ENCODE measurements at regions of chr11 and their contacts with region 1.

Region 1: GRCh38 chr11:107565219-107565937 is at the start of gene ALKBH8:
- DNase-seq: peak; percentile 75
- H3K4me3 ChIP-seq: peak within 1 kb of the TSS; percentile 28 to 80 (median 79)
- H3K27ac ChIP-seq: peak within 1 kb of the TSS; percentile 48
- H3K4me1 ChIP-seq: peaks cover 36% of the 10 kb centered on the region
- H3K27me3 ChIP-seq: no peaks in the 10 kb centered on the region
- CTCF ChIP-seq: no peak
- POLR2A ChIP-seq: peak; percentile 67
- total RNA-seq, gene ALKBH8: 9.8 and 10.2 TPM in 2 replicates

Region 2: DNA sequence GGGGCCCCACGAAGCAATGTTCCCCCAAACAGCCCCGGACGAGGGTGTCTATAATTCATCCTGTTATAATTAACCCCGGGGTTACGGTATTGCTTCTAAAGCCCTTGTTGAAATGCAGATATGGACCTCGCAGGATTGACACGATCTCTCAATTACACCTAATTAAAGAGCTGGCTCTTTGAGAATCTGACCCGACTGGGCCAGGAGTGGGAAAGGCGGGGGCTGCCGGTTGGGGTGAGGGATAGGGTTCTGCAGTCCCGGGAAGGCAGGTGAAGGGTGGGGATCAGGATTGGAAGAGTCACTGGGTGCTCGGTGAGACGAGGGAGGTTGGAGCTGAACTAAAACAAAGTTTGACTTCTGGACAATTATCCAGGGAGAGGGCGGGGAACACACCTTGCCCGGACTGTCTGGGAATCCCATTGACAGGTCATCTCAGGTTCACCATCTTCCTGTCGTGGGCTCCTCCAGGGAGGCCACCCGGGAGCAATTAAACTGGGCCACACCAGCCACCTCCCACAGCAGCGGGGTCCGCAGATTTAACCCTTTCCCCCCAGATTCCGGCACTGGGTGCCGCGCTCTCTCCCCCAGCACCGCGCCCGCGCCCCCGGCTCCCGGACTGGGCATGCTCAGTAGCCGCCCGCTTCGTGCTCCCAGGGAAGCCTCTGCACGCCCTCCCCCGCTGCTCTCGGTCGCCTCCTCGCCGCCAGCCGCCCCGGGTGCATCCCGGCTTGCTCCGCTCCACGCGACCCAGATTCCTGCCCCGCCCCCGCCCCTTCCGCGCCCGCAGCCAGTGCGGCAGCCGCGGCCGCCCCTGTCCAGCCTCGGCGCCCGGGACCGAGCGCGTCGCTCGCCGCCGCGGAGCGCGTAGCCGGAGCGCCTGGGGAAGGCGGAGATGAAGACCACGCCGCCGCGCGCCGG is 25.3 kb after region 1 on chr11 and contains the start of gene ELMOD1:
- CTCF ChIA-PET with region 1: interaction called, 5 read pairs
- POLR2A ChIA-PET with region 1: no interaction called
- dilution Hi-C with region 1: no loop called
- intact Hi-C with region 1: loop called (anchors 2 kb)
- DNase-seq: peak; percentile 46
- H3K4me3 ChIP-seq: peak within 1 kb of the TSS; percentile 5 to 86 (median 50)
- H3K27ac ChIP-seq: no peak within 1 kb of the TSS
- H3K4me1 ChIP-seq: peaks cover 12% of the 10 kb centered on the region
- H3K27me3 ChIP-seq: peaks cover 16 to 35% of the 10 kb centered on the region in 2 experiments
- CTCF ChIP-seq: peak in 1 of 2 donors; percentile 39
- POLR2A ChIP-seq: no peak
- total RNA-seq, gene ELMOD1: 0.53 and 2.4 TPM in 2 replicates

Region 3: DNA sequence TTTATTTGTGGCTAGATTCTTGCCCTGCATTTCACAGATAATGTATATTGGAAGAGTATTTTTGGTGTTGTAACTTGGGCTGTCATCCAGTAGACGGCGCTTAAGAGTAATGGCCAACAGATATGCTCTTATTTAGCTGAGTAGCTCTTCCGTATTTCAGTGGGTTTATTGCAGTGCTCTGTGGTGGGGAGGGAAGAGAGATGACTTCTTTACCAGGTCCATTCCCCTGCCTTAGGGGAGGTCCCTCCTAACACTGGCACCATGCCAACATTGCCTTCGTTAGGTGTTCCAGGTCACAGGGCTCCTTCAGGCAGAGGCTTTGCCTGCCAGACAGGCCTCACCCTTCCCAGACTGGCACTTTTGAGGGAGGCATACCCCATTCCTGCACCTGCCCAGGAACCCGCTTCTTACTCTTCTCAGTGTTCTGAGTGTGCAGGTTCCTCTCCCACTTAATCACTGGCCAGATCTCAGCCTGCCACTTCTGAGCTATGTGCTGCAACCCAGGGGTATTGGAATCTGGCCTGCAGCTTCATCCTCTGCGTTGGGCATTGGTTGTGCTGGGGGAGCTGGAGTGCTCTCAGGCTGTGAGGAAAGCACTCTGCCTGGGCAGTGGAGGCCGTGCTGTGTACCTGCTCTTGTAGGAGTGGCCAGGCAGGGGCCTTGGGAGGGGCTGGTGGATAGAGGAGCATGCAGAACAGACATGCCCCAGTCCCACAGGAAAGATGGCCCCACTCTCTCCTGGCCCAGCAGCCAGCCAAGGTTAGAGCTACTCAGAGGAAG is 175.9 kb after region 1 on chr11:
- CTCF ChIA-PET with region 1: interaction called, 20 read pairs
- POLR2A ChIA-PET with region 1: no interaction called
- dilution Hi-C with region 1: no loop called
- intact Hi-C with region 1: no loop called
- DNase-seq: peak; percentile 48
- H3K4me3 ChIP-seq: no peak overlapping the region
- H3K27ac ChIP-seq: no peak overlapping the region
- H3K4me1 ChIP-seq: no peaks in the 10 kb centered on the region
- H3K27me3 ChIP-seq: peaks cover 5 to 20% of the 10 kb centered on the region in 2 experiments
- CTCF ChIP-seq: peak; percentile 63 to 73
- POLR2A ChIP-seq: no peak

Region 4: GRCh38 chr11:107770551-107770951 is 205.2 kb after region 1 on chr11:
- CTCF ChIA-PET with region 1: interaction called, 34 read pairs
- POLR2A ChIA-PET with region 1: no interaction called
- dilution Hi-C with region 1: no loop called
- intact Hi-C with region 1: no loop called
- DNase-seq: no peak
- H3K4me3 ChIP-seq: no peak overlapping the region
- H3K27ac ChIP-seq: no peak overlapping the region
- H3K4me1 ChIP-seq: no peaks in the 10 kb centered on the region
- H3K27me3 ChIP-seq: peaks cover 2 to 4% of the 10 kb centered on the region in 2 experiments
- CTCF ChIP-seq: no peak
- POLR2A ChIP-seq: no peak

Region 5: DNA sequence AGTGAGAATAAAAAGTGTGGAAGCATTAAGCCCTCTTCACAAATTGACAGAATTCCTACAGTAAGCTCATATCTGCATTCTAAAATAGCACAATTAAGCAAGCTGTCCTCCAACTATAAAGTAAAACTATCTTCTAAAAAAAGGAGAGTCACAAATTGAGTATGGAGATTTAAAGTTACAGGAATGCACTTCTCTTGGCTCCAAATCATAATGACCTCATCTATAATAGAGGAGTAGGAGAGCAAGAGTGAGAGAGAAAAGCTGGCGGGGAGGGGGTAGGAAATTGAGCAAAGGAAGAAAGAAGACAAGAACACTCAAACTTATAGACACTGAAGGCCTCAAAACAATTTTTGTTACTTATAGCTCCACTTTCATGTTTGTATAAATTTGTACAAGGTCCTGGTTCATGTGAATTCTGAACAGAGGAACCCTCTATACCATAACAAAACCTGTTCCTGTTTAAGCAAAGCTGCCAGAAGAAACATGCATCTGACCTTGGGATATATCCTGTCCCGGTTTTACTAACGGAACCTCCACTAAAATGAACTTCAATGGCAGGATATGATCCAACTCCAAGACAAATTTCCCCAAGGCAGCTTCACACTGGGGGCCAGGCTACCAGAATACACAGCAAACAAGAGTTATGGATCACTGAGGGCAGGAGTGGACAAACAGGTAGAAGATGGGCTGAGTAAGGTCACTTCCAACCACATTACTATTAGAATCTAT is 256.0 kb after region 1 on chr11:
- CTCF ChIA-PET with region 1: no interaction called
- POLR2A ChIA-PET with region 1: no interaction called
- dilution Hi-C with region 1: no loop called
- intact Hi-C with region 1: no loop called
- DNase-seq: peak; percentile 97
- H3K4me3 ChIP-seq: peak overlapping the region in 2 of 3 experiments; percentile 16 to 63
- H3K27ac ChIP-seq: peak overlapping the region; percentile 99
- H3K4me1 ChIP-seq: peaks cover 59% of the 10 kb centered on the region
- H3K27me3 ChIP-seq: no peaks in the 10 kb centered on the region
- CTCF ChIP-seq: no peak
- POLR2A ChIP-seq: peak; percentile 52

Region 6: DNA sequence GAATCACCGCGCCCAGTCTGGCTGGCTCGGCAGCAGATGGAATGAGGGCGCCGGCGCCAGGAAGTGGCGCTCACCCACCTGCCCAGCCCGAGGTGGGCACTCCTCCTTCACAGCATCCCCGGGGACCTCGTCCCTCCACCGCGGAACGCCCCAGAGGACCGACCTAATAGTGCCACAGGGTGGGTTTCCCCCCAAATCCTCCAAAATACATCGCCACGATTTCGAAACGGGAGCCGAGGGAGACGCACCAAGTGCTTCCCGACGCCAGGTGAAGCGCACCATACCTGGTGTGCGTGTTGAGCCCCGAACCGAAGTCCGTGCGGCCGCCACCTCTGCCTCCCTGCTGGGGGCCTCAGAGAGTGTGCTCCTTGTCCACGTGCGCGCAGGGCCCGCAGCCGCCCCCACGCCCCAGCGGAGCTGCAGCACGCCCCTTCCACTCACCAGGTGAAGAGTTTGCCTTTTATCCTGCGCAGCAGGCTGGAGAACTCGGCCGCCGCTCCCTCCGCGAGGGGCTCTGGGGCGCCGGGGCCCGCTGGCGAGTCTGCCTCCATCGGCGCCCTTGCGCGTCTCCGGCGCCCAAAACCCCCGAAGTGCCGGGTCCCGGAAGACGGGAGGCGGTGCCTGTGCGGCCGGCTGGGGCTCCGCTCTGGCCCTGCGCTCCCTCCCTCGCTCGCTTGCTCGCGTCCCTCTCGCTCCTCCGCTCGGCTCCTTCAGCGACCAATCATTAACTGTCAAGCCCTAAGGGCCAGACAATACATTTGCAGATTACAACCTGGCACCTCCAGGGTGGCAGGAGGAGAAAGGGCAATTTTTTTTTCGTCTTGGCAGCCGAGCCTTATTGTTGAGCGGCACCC is 293.1 kb after region 1 on chr11 and contains the start of gene SLC35F2:
- CTCF ChIA-PET with region 1: no interaction called
- POLR2A ChIA-PET with region 1: no interaction called
- dilution Hi-C with region 1: no loop called
- intact Hi-C with region 1: loop called (anchors 2 kb)
- DNase-seq: peak; percentile 90
- H3K4me3 ChIP-seq: peak within 1 kb of the TSS; percentile 63 to 87 (median 79)
- H3K27ac ChIP-seq: peak within 1 kb of the TSS; percentile 64
- H3K4me1 ChIP-seq: peaks cover 8% of the 10 kb centered on the region
- H3K27me3 ChIP-seq: no peaks in the 10 kb centered on the region
- CTCF ChIP-seq: no peak
- POLR2A ChIP-seq: peak; percentile 86
- total RNA-seq, gene SLC35F2: 57.8 and 59.7 TPM in 2 replicates

Region 7: DNA sequence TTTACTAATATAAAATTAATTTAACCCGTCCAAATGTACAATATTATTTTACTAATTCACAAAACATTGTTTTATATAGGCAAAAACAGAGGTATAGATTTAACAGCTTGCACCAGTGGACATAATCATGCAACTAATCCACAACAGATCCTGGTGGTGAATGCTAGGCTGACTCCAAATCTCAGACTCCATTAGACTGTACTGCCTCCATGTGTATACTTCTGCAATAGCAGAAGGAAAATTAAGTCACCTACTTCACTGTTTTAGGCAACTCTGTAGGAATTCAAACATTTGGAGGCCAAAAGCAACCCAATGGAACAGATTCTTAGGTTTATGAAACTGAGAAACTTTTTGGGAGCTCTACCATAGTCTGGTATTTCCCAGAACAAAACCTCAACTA is 332.9 kb after region 1 on chr11:
- CTCF ChIA-PET with region 1: interaction called, 5 read pairs
- POLR2A ChIA-PET with region 1: no interaction called
- dilution Hi-C with region 1: no loop called
- intact Hi-C with region 1: loop called (anchors 10 kb)
- DNase-seq: peak; percentile 70
- H3K4me3 ChIP-seq: no peak overlapping the region
- H3K27ac ChIP-seq: no peak overlapping the region
- H3K4me1 ChIP-seq: no peaks in the 10 kb centered on the region
- H3K27me3 ChIP-seq: peaks cover 5 to 8% of the 10 kb centered on the region in 2 experiments
- CTCF ChIP-seq: peak; percentile 43 to 56
- POLR2A ChIP-seq: no peak

Region 8: DNA sequence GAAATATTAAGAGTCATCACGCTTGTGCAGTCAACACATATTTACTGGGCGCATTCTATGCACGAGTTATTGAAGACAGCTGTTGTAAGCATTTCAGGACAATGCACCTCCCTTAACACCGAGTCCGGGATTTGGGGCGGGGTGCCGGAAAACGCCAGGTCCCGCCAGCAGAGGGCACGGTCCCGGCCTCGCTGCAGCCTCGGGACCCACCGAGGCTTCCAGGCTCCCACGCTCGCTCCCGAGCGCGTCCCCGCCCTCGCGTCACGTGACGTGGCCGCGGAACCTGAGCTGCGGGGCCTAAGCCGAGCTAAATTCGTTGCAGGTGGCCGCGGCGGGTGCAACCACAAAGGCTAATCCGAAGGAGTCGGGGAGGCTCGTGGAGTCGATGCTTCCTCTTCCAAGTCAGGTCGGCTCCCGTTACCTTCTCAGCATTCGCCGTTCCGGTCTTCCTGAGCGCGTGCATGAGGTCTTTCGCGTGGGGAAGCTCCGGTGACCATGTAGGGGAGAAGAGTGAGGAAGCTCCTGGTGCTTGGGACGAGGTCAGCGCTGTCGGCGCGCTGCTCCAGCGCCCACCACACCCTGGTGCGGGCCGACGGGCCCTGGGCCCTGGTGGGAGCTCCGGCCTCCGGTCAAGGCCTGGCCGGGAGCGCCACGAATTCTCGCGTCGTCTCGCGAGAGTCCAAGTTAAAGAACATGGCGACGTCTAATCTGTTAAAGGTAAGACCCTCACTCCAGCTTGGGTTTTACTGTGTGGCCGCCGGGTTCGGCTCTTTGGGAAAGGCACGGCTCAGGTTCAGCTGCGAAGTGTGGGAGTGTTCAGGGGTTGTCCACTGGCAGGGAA is 443.5 kb after region 1 on chr11 and contains the start of gene CUL5:
- CTCF ChIA-PET with region 1: interaction called, 4 read pairs
- POLR2A ChIA-PET with region 1: no interaction called
- dilution Hi-C with region 1: no loop called
- intact Hi-C with region 1: loop called (anchors 10 kb)
- DNase-seq: peak; percentile 90
- H3K4me3 ChIP-seq: peak within 1 kb of the TSS; percentile 44 to 88 (median 60)
- H3K27ac ChIP-seq: peak within 1 kb of the TSS; percentile 75
- H3K4me1 ChIP-seq: peaks cover 12% of the 10 kb centered on the region
- H3K27me3 ChIP-seq: no peaks in the 10 kb centered on the region
- CTCF ChIP-seq: peak; percentile 91 to 96
- POLR2A ChIP-seq: peak; percentile 91
- total RNA-seq, gene CUL5: 36.6 and 37.6 TPM in 2 replicates